ENCODE measurements at regions of chr3 and their contacts with region 1.

Region 1: GRCh38 chr3:50227390-50228183 is 8.4 kb upstream of the GNAI2 start:
- DNase-seq: peak; percentile 62
- H3K4me3 ChIP-seq: peak overlapping the region; percentile 19 to 50 (median 33)
- H3K27ac ChIP-seq: no peak overlapping the region
- H3K4me1 ChIP-seq: peaks cover 13% of the 10 kb centered on the region
- H3K27me3 ChIP-seq: no peaks in the 10 kb centered on the region
- CTCF ChIP-seq: peak; percentile 66 to 76
- POLR2A ChIP-seq: peak; percentile 57

Region 2: GRCh38 chr3:49607796-49608195 is 619.8 kb before region 1 on chr3:
- CTCF ChIA-PET with region 1: no interaction called
- POLR2A ChIA-PET with region 1: no interaction called
- dilution Hi-C with region 1: no loop called
- intact Hi-C with region 1: no loop called
- DNase-seq: no peak
- H3K4me3 ChIP-seq: no peak overlapping the region
- H3K27ac ChIP-seq: no peak overlapping the region
- H3K4me1 ChIP-seq: no peaks in the 10 kb centered on the region
- H3K27me3 ChIP-seq: no peaks in the 10 kb centered on the region
- CTCF ChIP-seq: peak; percentile 18 to 19
- POLR2A ChIP-seq: no peak

Region 3: GRCh38 chr3:50121416-50122032 is 106.1 kb before region 1 on chr3:
- CTCF ChIA-PET with region 1: interaction called, 29 read pairs
- POLR2A ChIA-PET with region 1: no interaction called
- dilution Hi-C with region 1: no loop called
- intact Hi-C with region 1: loop called (anchors 1 kb)
- DNase-seq: peak; percentile 80
- H3K4me3 ChIP-seq: no peak overlapping the region
- H3K27ac ChIP-seq: no peak overlapping the region
- H3K4me1 ChIP-seq: peaks cover 7% of the 10 kb centered on the region
- H3K27me3 ChIP-seq: no peaks in the 10 kb centered on the region
- CTCF ChIP-seq: peak; percentile 75 to 79
- POLR2A ChIP-seq: peak; percentile 77

Region 4: DNA sequence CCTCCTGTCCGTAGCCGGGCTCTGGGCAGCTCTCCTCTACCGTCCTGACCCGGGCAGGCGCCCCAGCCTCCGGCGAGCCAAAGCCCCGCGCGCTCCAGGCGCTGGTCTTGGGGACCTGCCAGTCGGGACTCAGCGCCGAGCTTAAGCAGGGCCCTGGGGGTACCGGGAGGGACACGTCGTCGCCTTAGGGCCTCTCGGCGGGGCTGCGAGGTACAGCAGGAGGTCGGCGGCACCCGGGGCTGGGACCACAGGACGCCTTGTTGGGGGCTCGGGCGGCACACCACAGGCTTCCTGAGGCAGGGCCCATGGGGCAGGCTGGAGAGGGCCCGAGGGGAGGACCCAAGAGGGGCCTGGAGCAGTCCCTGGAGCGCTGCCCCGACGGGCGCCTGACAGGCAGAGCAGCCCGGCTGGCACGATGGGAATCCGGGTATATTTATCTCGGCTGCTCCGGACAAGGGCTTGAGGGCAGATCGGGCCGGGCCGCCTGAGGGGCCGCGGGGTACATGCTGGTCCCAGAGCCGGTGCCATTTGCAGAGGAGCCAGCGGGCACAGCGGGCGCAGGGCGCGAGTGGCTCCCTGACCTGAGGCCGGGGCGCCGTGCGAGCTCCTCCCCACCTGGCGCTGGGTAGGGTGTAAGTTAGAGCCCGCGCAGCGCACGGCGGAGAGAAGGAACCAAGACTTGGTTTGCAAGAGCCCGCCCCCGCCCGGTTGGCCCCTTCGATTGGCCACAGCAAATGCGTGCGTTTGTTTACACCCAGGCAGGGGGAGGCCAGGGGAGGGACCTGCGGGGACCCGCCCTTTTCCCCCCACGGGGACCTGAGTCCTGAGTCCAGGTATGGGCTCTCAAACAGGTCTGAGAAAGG is 21.9 kb before region 1 on chr3:
- CTCF ChIA-PET with region 1: interaction called, 43 read pairs
- POLR2A ChIA-PET with region 1: interaction called, 6 read pairs
- dilution Hi-C with region 1: no loop called
- intact Hi-C with region 1: no loop called
- DNase-seq: peak; percentile 31
- H3K4me3 ChIP-seq: peak overlapping the region in 2 of 3 experiments; percentile 27 to 36
- H3K27ac ChIP-seq: no peak overlapping the region
- H3K4me1 ChIP-seq: peaks cover 3% of the 10 kb centered on the region
- H3K27me3 ChIP-seq: peaks cover 18% of the 10 kb centered on the region in 2 experiments
- CTCF ChIP-seq: no peak
- POLR2A ChIP-seq: no peak

Region 5: GRCh38 chr3:50267280-50267913 is 39.8 kb after region 1 on chr3:
- CTCF ChIA-PET with region 1: interaction called, 12 read pairs
- POLR2A ChIA-PET with region 1: no interaction called
- dilution Hi-C with region 1: no loop called
- intact Hi-C with region 1: no loop called
- DNase-seq: no peak
- H3K4me3 ChIP-seq: no peak overlapping the region
- H3K27ac ChIP-seq: no peak overlapping the region
- H3K4me1 ChIP-seq: no peaks in the 10 kb centered on the region
- H3K27me3 ChIP-seq: peaks cover 3 to 6% of the 10 kb centered on the region in 2 experiments
- CTCF ChIP-seq: no peak
- POLR2A ChIP-seq: no peak

Region 6: DNA sequence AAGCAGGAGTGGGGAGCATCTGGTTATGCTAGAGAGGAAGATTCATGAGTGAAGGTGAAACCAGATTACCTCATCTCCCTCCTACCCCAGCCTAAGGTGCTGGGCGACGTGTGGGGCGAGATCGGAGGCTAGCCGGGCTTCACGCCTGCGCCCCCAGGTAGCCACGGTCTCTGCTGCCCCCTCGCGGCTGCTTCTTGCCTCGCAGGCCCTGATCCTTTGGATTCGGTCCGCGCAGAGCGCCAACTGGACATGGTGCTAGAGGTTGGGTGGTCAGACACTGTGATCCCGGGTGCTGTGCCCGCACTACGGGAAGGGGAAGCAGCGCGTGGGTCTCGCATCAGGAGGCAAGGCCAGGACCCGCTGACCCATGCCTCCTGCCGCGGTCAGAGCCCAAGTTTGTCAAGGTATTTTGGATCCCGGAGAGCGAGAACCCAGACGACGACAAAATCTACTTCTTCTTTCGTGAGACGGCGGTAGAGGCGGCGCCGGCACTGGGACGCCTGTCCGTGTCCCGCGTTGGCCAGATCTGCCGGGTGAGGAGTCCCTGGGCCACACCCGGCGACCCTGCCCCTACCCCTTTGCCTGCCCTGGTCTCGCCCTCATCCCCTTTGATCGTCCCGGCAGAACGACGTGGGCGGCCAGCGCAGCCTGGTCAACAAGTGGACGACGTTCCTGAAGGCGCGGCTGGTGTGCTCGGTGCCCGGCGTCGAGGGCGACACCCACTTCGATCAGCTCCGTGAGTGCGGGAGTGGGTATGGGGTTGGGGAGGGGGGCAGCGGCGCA is 45.5 kb after region 1 on chr3:
- CTCF ChIA-PET with region 1: interaction called, 14 read pairs
- POLR2A ChIA-PET with region 1: no interaction called
- dilution Hi-C with region 1: no loop called
- intact Hi-C with region 1: loop called (anchors 1 kb)
- DNase-seq: peak; percentile 84
- H3K4me3 ChIP-seq: peak overlapping the region in 2 of 3 experiments; percentile 13 to 14
- H3K27ac ChIP-seq: no peak overlapping the region
- H3K4me1 ChIP-seq: peaks cover 2% of the 10 kb centered on the region
- H3K27me3 ChIP-seq: peaks cover 18 to 24% of the 10 kb centered on the region in 2 experiments
- CTCF ChIP-seq: peak; percentile 93 to 98
- POLR2A ChIP-seq: no peak

Region 7: DNA sequence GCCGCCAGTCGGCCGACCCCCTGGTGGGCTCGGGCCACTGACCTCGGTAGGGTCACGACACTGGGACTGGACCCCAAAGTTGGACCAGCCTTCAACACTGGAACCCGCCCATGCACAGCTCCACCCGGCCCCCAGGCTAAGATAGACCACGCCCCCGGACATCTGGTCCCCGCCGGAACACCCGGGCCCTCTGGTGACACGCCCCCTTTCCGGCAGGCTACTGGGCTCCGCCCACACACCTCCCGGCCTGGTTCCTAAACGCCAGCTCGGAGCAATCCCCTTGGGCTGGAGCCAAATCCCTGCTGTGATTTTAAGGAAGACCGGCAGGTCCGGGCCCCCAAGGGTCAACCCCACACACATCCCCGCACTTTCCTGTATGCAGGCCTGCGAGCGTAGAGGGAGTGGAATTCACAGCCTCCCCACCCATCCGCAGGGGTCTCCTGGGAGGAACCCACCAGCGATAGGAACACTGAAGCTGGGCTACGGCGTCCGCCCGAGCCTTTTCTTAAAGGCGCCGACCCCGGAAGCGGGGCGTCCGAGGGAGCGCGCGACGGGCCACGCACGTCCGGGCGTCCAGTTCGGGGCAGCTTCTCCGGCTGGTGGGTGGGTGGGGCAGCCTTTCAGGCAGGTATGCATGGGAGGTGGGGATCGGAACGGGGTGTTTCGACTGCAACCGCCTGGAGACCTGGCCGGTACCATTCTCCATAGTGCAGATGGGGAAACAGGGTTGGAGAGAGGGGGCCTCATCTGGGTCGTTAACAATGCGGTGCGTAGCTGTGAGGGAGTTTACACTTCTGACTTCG is 341.6 kb after region 1 on chr3 and contains the start of gene HEMK1:
- CTCF ChIA-PET with region 1: no interaction called
- POLR2A ChIA-PET with region 1: no interaction called
- dilution Hi-C with region 1: no loop called
- intact Hi-C with region 1: no loop called
- DNase-seq: peak; percentile 87
- H3K4me3 ChIP-seq: peak within 1 kb of the TSS; percentile 84 to 91 (median 85)
- H3K27ac ChIP-seq: peak within 1 kb of the TSS; percentile 31
- H3K4me1 ChIP-seq: peaks cover 10% of the 10 kb centered on the region
- H3K27me3 ChIP-seq: no peaks in the 10 kb centered on the region
- CTCF ChIP-seq: no peak
- POLR2A ChIP-seq: peak; percentile 24
- total RNA-seq, gene HEMK1: 12.0 and 15.2 TPM in 2 replicates